CD8-positive, alpha-beta T cell (primary cell): ENCODE measurements at regions of chr20 and their contacts with region 1.

Region 1: DNA sequence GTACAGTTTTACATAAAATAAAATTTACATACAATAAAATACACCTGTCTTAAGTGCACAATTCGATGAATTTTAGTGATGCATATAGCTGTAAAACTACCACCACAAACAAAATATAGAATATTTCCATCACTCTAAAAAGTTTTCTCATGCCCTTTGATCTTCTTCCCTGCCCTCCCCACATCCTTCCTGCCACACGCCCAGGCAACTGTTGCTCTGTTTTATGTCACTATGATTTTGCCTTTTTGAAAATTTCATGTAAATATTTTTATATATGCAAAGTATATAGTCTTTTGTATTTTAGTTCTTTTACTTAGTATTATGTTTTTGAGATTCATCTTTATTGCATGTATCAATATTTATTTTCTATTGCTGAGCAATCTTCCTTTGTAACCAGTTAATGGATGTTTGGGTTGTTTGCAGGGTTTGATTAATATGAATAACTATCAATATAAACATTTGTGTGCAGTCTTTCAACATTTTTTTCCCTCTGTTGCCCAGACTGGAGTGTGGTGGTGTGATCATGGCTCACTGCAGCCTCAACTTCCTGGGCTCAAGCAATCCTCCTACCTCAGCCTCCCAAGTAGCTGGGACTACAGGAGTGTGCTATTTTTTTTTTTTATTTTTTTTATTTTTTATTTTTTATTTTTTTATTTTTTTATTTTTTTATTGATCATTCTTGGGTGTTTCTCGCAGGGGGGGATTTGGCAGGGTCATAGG is 23.8 kb upstream of the SAMHD1 start:
- DNase-seq: peak; percentile 21 to 86 (median 68)
- ATAC-seq: peak; percentile 86
- H3K4me3 ChIP-seq: peak overlapping the region in 1 of 2 experiments; percentile 1
- H3K4me3 Mint-ChIP-seq: peak overlapping the region; percentile 35
- H3K27ac ChIP-seq: peak overlapping the region; percentile 66 to 83
- H3K27ac Mint-ChIP-seq: peak overlapping the region; percentile 66
- H3K4me1 ChIP-seq: peaks cover 46% of the 10 kb centered on the region
- H3K4me1 Mint-ChIP-seq: peaks cover 40% of the 10 kb centered on the region
- H3K27me3 ChIP-seq: no peaks in the 10 kb centered on the region
- H3K27me3 Mint-ChIP-seq: no peaks in the 10 kb centered on the region
- CTCF ChIP-seq: no peak

Region 2: DNA sequence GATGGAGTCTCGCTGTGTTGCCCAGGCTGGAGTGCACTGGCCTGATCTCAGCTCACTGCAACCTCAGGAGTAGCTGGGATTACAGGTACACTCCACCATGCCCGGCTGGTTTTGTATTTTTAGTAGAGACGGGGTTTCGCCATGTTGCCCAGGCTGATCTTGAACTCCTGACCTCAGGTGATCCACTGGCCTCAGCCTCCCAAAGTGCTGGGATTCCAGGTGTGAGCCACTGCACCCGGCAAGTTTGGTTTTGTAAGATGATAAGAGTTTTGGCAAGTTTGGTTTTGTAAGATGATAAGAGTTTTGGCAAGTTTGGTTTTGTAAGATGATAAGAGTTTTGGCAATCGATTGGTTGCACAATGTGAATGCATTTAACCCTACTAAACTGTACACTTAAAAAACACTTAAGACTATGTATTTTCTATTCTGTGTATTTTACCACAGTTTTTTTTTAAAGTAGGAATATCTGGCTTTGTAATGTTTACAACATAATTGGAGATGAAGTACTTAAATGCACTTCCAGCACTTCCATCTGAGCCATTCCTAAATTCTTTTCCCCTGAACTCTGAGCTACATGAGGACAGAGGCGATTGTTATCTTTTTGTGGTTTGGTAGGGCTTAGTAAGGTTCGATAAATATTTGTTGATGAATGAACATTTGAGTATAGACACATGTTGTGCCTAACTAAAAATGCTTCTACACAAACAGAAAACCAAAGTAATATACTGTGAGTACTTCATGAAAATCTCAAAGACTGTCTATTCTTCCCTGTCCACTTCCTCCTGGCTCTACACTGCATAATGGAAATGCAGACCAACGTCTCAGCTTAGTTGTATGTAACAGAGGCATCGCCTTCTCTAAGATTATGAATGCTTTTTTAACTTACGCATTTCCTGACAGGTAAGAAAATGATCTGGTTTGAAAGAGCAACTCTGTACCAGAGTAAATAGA is 42.5 kb before region 1 on chr20:
- CTCF ChIA-PET with region 1: no interaction called
- POLR2A ChIA-PET with region 1: interaction called, 15 read pairs
- intact Hi-C with region 1: loop called in 1 of 2 experiments (anchors 5 kb)
- DNase-seq: peak in 1 of 9 experiments; percentile 35
- ATAC-seq: no peak
- H3K4me3 ChIP-seq: no peak overlapping the region
- H3K4me3 Mint-ChIP-seq: no peak overlapping the region
- H3K27ac ChIP-seq: peak overlapping the region; percentile 10 to 29
- H3K27ac Mint-ChIP-seq: peak overlapping the region; percentile 69
- H3K4me1 ChIP-seq: peaks cover 65% of the 10 kb centered on the region
- H3K4me1 Mint-ChIP-seq: peaks cover 54% of the 10 kb centered on the region
- H3K27me3 ChIP-seq: no peaks in the 10 kb centered on the region
- H3K27me3 Mint-ChIP-seq: no peaks in the 10 kb centered on the region
- CTCF ChIP-seq: no peak

Region 3: GRCh38 chr20:36941401-36941835 is 33.8 kb before region 1 on chr20:
- CTCF ChIA-PET with region 1: no interaction called
- POLR2A ChIA-PET with region 1: interaction called, 3 read pairs
- intact Hi-C with region 1: loop called (anchors 1 to 5 kb)
- DNase-seq: peak in 2 of 9 experiments; percentile 27 to 35
- ATAC-seq: no peak
- H3K4me3 ChIP-seq: peak overlapping the region in 1 of 2 experiments; percentile 5
- H3K4me3 Mint-ChIP-seq: peak overlapping the region; percentile 52
- H3K27ac ChIP-seq: peak overlapping the region; percentile 13 to 67
- H3K27ac Mint-ChIP-seq: peak overlapping the region; percentile 88
- H3K4me1 ChIP-seq: peaks cover 82% of the 10 kb centered on the region
- H3K4me1 Mint-ChIP-seq: peaks cover 68% of the 10 kb centered on the region
- H3K27me3 ChIP-seq: no peaks in the 10 kb centered on the region
- H3K27me3 Mint-ChIP-seq: no peaks in the 10 kb centered on the region
- CTCF ChIP-seq: no peak

Region 4: DNA sequence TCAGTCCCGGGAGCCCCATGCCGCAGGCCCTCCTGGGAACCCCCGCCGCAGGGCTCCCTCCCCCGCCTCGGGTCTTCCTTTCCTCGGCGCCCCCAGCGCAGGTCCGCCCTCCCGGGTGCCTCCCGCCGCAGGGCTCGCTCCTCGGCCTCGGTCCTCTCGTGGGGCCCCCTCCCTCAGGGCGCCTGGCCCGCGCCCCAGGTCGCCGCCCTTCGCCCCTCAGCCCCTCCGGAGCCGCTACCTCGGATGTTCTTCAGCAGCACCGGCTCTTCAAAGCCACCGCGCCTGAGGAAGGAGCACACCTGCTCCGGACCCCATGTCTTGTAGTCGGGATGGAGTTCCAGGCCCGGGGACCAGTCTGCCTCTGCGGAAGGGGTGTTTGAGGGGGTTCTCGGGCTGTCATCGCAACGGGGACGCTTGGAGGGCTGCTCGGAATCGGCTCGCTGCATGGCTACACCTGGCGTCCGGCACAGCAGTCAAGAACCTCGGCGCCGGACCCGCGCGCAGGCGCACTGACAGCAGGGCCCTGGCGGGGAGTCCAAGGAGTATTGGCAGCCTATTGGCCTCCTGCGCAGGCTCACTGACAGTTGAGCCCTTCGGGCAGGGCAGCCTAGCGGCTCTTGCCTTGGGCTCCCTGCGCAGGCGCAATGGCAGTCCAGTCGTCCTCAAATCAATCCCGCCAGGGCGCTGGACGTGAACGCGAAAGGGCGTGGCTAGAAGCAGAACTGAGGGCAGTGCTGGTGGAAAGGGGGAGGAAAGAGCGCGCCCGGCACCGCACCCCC is 23.9 kb before region 1 on chr20 and contains the start of gene SAMHD1:
- CTCF ChIA-PET with region 1: interaction called, 4 read pairs
- POLR2A ChIA-PET with region 1: interaction called, 6 read pairs
- intact Hi-C with region 1: loop called (anchors 1 to 2 kb)
- DNase-seq: peak; percentile 67 to 92 (median 82)
- ATAC-seq: peak; percentile 70
- H3K4me3 ChIP-seq: peak within 1 kb of the TSS; percentile 95 to 99
- H3K4me3 Mint-ChIP-seq: peak within 1 kb of the TSS; percentile 96
- H3K27ac ChIP-seq: peak within 1 kb of the TSS; percentile 80 to 88
- H3K27ac Mint-ChIP-seq: peak within 1 kb of the TSS; percentile 96
- H3K4me1 ChIP-seq: peaks cover 47% of the 10 kb centered on the region
- H3K4me1 Mint-ChIP-seq: peaks cover 50% of the 10 kb centered on the region
- H3K27me3 ChIP-seq: no peaks in the 10 kb centered on the region
- H3K27me3 Mint-ChIP-seq: no peaks in the 10 kb centered on the region
- CTCF ChIP-seq: no peak
- total RNA-seq, gene SAMHD1: 74.6 to 78.2 TPM

Region 5: DNA sequence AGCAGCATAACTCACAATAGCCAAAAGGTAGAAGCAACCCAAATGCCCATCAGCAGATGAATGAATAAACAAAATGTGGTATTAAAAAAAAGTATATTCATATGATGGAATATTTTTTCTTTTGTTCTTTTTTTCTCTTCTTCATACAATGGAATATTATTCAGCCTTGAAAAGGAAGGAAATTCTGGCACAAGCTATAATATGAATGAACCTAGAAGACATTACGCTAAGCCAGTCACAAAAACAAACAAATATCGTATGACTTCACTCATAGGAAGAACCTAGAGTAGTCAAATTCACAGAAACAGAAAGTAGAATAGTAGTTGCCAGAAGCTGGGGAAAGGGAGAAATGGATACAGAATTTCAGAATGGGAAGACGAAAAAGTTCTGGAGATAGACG is 56.8 kb after region 1 on chr20:
- CTCF ChIA-PET with region 1: no interaction called
- POLR2A ChIA-PET with region 1: no interaction called
- intact Hi-C with region 1: no loop called
- DNase-seq: no peak
- ATAC-seq: no peak
- H3K4me3 ChIP-seq: no peak overlapping the region
- H3K4me3 Mint-ChIP-seq: no peak overlapping the region
- H3K27ac ChIP-seq: no peak overlapping the region
- H3K27ac Mint-ChIP-seq: no peak overlapping the region
- H3K4me1 ChIP-seq: no peaks in the 10 kb centered on the region
- H3K4me1 Mint-ChIP-seq: peaks cover 2% of the 10 kb centered on the region
- H3K27me3 ChIP-seq: no peaks in the 10 kb centered on the region
- H3K27me3 Mint-ChIP-seq: no peaks in the 10 kb centered on the region
- CTCF ChIP-seq: no peak